Natural killer cell (primary cell): ENCODE measurements at regions of chr14 and their contacts with region 1.

Region 1: GRCh38 chr14:52729925-52730667 is at the start of gene STYX:
- DNase-seq: peak; percentile 96 to 99
- ATAC-seq: peak; percentile 96 to 100 (median 96)
- H3K4me3 ChIP-seq: peak within 1 kb of the TSS; percentile 98
- H3K4me3 Mint-ChIP-seq: peak within 1 kb of the TSS; percentile 93
- H3K27ac ChIP-seq: peak within 1 kb of the TSS; percentile 67
- H3K27ac Mint-ChIP-seq: peak within 1 kb of the TSS; percentile 83 to 93
- H3K4me1 ChIP-seq: peaks cover 12% of the 10 kb centered on the region
- H3K4me1 Mint-ChIP-seq: peaks cover 27 to 28% of the 10 kb centered on the region in 2 donors
- H3K27me3 ChIP-seq: no peaks in the 10 kb centered on the region
- H3K27me3 Mint-ChIP-seq: no peaks in the 10 kb centered on the region
- CTCF ChIP-seq: no peak
- total RNA-seq, gene STYX: 13.3 to 22.9 (median 18.3) TPM

Region 2: DNA sequence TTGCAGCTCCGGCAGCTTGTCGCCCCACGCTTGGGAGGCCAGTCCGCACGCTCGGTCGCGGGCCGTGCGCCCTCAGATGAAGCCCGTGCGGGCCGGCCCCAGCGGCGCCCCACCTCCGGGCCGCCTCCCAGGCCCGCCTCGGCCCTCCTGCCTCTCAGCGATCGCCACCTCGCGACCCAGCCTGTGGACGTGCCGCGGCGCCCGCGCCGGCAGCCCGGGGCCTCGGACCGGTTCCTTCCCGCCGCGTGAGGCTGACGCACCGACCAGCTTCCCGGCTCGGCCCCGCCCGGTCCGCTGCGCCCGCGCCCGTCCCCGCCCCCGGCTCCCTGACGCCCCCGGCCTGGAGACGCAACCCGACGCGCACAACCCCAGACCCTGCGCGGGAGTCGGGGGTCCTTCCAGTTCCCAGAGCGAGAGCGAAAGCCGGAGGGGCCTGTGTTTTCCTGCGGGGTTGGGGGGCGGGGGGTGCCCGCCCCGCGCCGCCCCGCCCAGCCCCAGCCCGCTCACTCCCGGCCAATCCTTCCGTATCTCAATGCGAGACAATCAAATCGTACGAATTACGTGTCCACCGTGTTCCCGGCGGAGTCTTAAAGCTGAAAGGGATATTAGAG is 34.5 kb before region 1 on chr14 and contains the start of gene ERO1A:
- intact Hi-C with region 1: no loop called
- DNase-seq: peak; percentile 68 to 75
- ATAC-seq: peak; percentile 81 to 83 (median 82)
- H3K4me3 ChIP-seq: peak within 1 kb of the TSS; percentile 92
- H3K4me3 Mint-ChIP-seq: peak within 1 kb of the TSS; percentile 99
- H3K27ac ChIP-seq: peak within 1 kb of the TSS; percentile 89
- H3K27ac Mint-ChIP-seq: peak within 1 kb of the TSS; percentile 90 to 93
- H3K4me1 ChIP-seq: peaks cover 18% of the 10 kb centered on the region
- H3K4me1 Mint-ChIP-seq: peaks cover 35 to 38% of the 10 kb centered on the region in 2 donors
- H3K27me3 ChIP-seq: no peaks in the 10 kb centered on the region
- H3K27me3 Mint-ChIP-seq: no peaks in the 10 kb centered on the region
- CTCF ChIP-seq: no peak
- total RNA-seq, gene ERO1A: 35.4 to 47.7 (median 42.5) TPM

Region 3: GRCh38 chr14:52706724-52707706 is 23.1 kb before region 1 on chr14 and contains the start of gene PSMC6:
- intact Hi-C with region 1: loop called (anchors 1 kb)
- DNase-seq: peak; percentile 85 to 96
- ATAC-seq: peak; percentile 98 to 100 (median 99)
- H3K4me3 ChIP-seq: peak within 1 kb of the TSS; percentile 75
- H3K4me3 Mint-ChIP-seq: peak within 1 kb of the TSS; percentile 97
- H3K27ac ChIP-seq: peak within 1 kb of the TSS; percentile 94
- H3K27ac Mint-ChIP-seq: peak within 1 kb of the TSS; percentile 97
- H3K4me1 ChIP-seq: peaks cover 10% of the 10 kb centered on the region
- H3K4me1 Mint-ChIP-seq: peaks cover 23 to 30% of the 10 kb centered on the region in 2 donors
- H3K27me3 ChIP-seq: no peaks in the 10 kb centered on the region
- H3K27me3 Mint-ChIP-seq: peaks cover 0 to 4% of the 10 kb centered on the region in 2 donors
- CTCF ChIP-seq: no peak
- total RNA-seq, gene PSMC6: 148 to 160 (median 159) TPM

Region 4: DNA sequence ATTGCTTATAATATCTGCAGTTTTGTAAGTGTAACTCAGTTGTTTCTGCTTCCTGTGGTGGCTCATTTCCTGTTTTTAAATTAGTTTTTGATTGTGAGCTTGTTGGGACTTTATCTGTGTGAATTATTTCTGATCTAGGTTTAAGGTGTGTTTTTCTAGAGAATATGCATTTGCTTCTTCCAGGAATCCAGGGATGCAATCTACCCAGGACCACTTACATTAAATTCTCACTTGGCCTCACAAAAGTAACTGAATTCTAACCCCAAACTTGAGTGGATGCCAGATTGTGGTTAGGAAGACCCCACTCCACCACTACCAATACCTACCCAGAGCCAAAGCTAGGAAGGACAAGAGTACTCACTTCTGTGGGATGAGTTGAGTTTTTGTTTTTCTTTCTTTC is 11.8 kb after region 1 on chr14:
- intact Hi-C with region 1: loop called (anchors 1 kb)
- DNase-seq: peak in 1 of 2 donors; percentile 63
- ATAC-seq: peak; percentile 18 to 38 (median 24)
- H3K4me3 ChIP-seq: peak overlapping the region; percentile 9
- H3K4me3 Mint-ChIP-seq: peak overlapping the region; percentile 74
- H3K27ac ChIP-seq: peak overlapping the region; percentile 88
- H3K27ac Mint-ChIP-seq: peak overlapping the region; percentile 93 to 96
- H3K4me1 ChIP-seq: peaks cover 18% of the 10 kb centered on the region
- H3K4me1 Mint-ChIP-seq: peaks cover 35 to 45% of the 10 kb centered on the region in 2 donors
- H3K27me3 ChIP-seq: no peaks in the 10 kb centered on the region
- H3K27me3 Mint-ChIP-seq: no peaks in the 10 kb centered on the region
- CTCF ChIP-seq: no peak

Region 5: GRCh38 chr14:52755607-52756253 is 25.6 kb after region 1 on chr14:
- intact Hi-C with region 1: no loop called
- DNase-seq: no peak
- ATAC-seq: no peak
- H3K4me3 ChIP-seq: no peak overlapping the region
- H3K4me3 Mint-ChIP-seq: no peak overlapping the region
- H3K27ac ChIP-seq: no peak overlapping the region
- H3K27ac Mint-ChIP-seq: no peak overlapping the region
- H3K4me1 ChIP-seq: no peaks in the 10 kb centered on the region
- H3K4me1 Mint-ChIP-seq: no peaks in the 10 kb centered on the region
- H3K27me3 ChIP-seq: no peaks in the 10 kb centered on the region
- H3K27me3 Mint-ChIP-seq: no peaks in the 10 kb centered on the region
- CTCF ChIP-seq: no peak

Region 6: GRCh38 chr14:53093206-53093605 is 363.1 kb after region 1 on chr14:
- intact Hi-C with region 1: no loop called
- DNase-seq: no peak
- ATAC-seq: no peak
- H3K4me3 ChIP-seq: no peak overlapping the region
- H3K4me3 Mint-ChIP-seq: no peak overlapping the region
- H3K27ac ChIP-seq: no peak overlapping the region
- H3K27ac Mint-ChIP-seq: no peak overlapping the region
- H3K4me1 ChIP-seq: no peaks in the 10 kb centered on the region
- H3K4me1 Mint-ChIP-seq: peaks cover 13 to 16% of the 10 kb centered on the region in 2 donors
- H3K27me3 ChIP-seq: no peaks in the 10 kb centered on the region
- H3K27me3 Mint-ChIP-seq: no peaks in the 10 kb centered on the region
- CTCF ChIP-seq: no peak